Activated CD8-positive, alpha-beta T cell treated with anti-CD3 and anti-CD28 coated beads for 36 hours (primary cell): ENCODE measurements at regions of chr15 and their contacts with region 1.

Region 1: GRCh38 chr15:41811432-41812195 is 16.3 kb upstream of the JMJD7 start:
- DNase-seq: peak; percentile 86
- ATAC-seq: peak; percentile 91
- H3K4me3 Mint-ChIP-seq: no peak overlapping the region
- H3K27ac Mint-ChIP-seq: no peak overlapping the region
- H3K4me1 Mint-ChIP-seq: peaks cover 18% of the 10 kb centered on the region
- H3K27me3 Mint-ChIP-seq: no peaks in the 10 kb centered on the region
- CTCF ChIP-seq: peak; percentile 92

Region 2: DNA sequence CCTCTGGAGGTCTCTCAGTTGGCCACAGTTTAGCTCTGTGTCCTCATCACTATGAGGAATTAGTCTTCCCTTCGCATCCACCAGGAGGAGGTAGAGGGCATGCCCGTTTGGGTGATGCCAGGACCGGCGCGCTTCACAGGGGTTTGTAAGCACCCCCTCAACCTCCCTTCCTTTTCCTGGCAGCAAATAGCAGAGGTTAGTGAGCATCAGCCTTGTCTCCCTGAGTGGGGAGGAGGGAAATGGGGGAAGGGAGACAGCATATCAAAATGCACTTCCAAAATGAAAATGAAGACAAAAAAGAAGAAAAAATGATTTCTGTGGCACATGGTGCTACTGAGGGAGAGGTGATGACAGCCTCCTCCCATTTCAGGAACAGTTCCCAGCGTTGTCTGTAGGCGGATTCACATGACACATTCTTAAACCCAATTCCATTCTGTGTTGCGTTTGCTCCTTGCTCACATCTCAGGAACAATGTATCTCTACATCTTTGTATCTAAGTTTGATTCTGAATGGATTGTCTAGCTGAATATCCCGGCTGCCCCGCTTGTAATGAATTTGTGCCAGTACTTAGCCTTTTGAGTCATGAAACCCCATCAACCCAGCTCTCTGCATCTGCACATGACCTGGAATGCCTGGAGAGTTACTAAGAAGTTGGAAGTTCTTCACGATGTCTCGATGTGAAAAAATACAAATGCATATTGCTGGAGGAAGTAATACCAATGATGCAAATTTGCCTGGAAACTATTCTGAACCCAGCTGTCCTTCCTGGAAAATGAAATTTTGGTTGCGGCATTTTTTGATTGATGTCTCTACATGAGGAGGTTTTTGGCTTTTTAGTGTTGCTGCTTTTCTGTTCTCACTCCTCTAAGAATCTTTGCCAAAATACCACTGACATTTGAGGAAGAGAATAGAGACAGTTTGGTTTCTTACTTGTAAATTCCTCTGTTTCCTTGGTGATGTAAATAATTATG is 207.4 kb before region 1 on chr15:
- CTCF ChIA-PET with region 1: interaction called, 33 read pairs
- POLR2A ChIA-PET with region 1: no interaction called
- intact Hi-C with region 1: no loop called
- DNase-seq: peak; percentile 69
- ATAC-seq: peak; percentile 97
- H3K4me3 Mint-ChIP-seq: peak overlapping the region; percentile 48
- H3K27ac Mint-ChIP-seq: no peak overlapping the region
- H3K4me1 Mint-ChIP-seq: peaks cover 10% of the 10 kb centered on the region
- H3K27me3 Mint-ChIP-seq: peaks cover 7% of the 10 kb centered on the region
- CTCF ChIP-seq: peak; percentile 79

Region 3: DNA sequence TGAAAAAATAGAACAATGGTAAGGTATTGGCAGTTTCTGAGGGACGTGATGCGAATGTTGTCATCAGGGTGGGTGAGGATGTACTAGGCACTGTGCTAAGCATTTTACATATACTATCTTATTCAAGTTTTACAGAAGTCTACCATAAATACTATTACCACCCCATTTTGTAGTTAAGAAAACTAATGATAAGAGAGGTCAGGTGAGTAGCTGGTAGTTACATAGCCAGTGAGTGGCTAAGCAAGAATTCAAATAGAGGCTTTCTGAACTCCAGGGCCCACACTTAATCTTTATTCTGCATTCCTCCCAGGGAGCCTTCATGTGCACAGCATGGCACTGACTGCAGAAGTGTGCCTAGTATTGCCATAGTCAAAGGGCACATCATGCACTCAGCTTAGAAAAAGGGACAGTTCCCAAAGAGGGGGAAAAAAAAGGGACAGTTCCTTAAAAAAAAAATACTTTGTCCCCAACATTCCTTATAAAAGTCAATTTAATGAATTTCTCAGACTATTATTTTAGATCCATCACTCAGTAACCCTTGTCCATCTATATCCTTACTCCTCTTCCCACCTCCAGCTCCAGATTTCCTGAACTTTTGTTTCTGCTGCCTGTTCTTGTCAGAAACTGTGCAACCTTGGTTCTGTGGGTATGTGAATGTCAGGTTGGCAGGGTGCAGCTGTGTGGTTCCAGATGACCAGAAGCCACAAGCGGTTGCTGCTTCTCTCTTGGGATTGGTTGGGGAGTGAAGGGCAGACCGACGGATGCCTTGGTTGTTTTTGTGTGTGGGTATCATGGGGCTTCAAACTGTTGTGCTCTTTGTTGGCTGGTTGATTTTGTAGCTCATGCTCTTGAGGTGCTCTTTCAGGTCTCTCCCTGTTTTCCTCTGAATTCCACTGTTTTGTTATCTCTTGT is 29.0 kb before region 1 on chr15:
- CTCF ChIA-PET with region 1: interaction called, 337 read pairs
- POLR2A ChIA-PET with region 1: no interaction called
- intact Hi-C with region 1: no loop called
- DNase-seq: no peak
- ATAC-seq: no peak
- H3K4me3 Mint-ChIP-seq: no peak overlapping the region
- H3K27ac Mint-ChIP-seq: no peak overlapping the region
- H3K4me1 Mint-ChIP-seq: peaks cover 36% of the 10 kb centered on the region
- H3K27me3 Mint-ChIP-seq: no peaks in the 10 kb centered on the region
- CTCF ChIP-seq: no peak

Region 4: DNA sequence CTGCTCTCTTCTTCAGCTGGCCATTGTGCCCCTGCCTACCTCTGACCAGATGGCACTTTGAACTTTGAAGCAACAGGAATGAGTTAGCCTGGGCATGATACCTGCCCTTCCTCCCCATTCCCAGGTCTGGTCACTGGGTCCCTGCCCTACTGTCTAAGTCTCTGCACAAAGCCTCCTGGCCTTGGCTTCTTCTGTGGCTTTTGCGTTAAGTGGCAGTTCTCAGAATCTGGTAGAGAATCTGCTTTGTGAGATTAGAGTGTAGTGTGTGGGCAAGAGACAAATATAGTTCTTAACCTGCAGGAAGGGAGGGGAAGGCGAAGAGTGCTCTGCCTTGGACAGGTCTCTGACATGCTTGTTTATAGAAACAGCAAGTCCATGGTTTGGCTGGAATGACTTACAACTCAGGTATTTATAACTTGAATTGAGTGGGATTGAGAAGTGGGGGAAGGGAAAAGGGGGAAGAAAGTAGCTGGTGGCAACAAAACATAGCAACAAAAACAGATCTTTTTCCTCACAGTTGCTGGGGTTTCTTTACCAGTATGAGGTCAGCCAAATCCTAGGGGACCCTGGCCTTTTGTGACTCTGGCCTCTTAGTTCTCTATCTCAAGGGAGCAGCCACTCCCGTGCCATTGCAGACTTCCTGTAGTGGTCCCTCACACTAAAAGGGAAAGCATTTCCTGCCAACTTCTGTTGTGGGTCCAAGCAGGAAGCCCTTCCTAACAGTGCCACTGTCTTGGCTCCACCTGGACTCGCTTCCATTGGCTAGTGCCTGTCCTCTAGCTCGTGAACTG is 20.7 kb before region 1 on chr15:
- CTCF ChIA-PET with region 1: interaction called, 39 read pairs
- POLR2A ChIA-PET with region 1: no interaction called
- intact Hi-C with region 1: no loop called
- DNase-seq: no peak
- ATAC-seq: peak; percentile 62
- H3K4me3 Mint-ChIP-seq: no peak overlapping the region
- H3K27ac Mint-ChIP-seq: peak overlapping the region; percentile 64
- H3K4me1 Mint-ChIP-seq: peaks cover 40% of the 10 kb centered on the region
- H3K27me3 Mint-ChIP-seq: no peaks in the 10 kb centered on the region
- CTCF ChIP-seq: no peak

Region 5: DNA sequence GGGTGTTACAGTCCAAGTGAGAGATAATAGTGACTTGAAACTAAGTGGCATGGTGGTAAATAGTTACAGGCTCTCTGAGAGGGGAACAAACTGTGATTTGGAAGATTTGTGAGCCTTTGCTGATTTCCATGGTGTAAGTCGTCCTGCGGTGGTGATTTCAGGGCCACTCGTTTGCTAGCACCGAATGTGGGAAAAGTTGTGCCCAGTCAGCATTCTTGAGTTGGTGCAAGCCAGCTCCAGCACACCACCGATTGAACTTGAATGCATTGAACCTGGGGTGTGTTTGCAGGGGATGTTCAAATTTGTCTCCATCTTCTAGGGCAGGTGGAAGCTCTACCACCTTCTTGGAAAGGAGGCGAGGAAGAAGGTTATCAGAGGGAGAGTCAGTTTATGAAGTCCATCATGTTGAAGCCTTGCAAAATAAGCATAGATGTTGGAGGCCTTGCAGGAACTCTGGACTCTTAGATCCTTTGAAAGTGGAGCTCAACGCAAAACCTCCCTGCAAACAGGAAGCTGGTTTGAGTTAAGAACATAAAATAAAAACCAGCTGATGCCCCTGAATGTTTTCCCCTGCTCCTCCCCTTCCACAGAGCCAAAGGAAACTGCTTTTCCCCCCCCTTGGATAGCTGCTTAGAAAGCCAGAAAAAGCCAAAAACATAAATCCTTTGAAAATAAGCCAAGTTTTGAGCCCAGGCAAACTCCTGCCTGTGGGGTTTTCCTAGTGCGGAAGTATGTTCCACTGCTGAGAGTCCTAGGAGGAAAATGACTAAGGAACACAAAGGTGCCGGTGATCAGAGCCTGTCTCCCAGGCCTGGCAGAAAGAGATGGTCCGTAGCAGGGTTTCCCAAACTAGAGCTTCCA is 15.4 kb before region 1 on chr15:
- CTCF ChIA-PET with region 1: interaction called, 39 read pairs
- POLR2A ChIA-PET with region 1: no interaction called
- intact Hi-C with region 1: no loop called
- DNase-seq: no peak
- ATAC-seq: no peak
- H3K4me3 Mint-ChIP-seq: no peak overlapping the region
- H3K27ac Mint-ChIP-seq: no peak overlapping the region
- H3K4me1 Mint-ChIP-seq: peaks cover 38% of the 10 kb centered on the region
- H3K27me3 Mint-ChIP-seq: no peaks in the 10 kb centered on the region
- CTCF ChIP-seq: no peak